AG04450 (cell line): ENCODE measurements at regions of chr16 and their contacts with region 1.

Region 1: DNA sequence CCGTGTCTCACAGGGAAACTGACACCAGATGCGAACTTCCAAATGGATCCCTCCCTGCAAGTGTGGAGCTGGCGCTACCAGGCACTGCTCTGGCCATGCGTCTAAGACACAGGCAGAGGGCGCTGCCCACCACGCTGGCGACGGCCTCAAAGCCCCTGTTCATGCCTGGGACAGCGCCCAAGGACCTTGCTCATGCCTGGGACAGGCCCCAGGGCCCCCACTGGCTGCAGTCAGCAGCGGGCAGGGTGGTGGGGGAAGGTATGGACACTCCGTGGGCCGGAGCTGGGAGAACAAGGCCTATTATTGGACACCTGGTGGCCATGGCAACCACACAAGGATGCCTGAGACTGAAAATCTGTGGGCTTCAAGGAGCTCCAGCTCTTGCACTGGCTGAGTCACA is 8.8 kb downstream of the ZG16B start:
- DNase-seq: peak; percentile 65
- H3K4me3 ChIP-seq: no peak overlapping the region
- H3K27ac ChIP-seq: peak overlapping the region; percentile 21
- H3K27me3 ChIP-seq: no peaks in the 10 kb centered on the region
- CTCF ChIP-seq: peak; percentile 96

Region 2: DNA sequence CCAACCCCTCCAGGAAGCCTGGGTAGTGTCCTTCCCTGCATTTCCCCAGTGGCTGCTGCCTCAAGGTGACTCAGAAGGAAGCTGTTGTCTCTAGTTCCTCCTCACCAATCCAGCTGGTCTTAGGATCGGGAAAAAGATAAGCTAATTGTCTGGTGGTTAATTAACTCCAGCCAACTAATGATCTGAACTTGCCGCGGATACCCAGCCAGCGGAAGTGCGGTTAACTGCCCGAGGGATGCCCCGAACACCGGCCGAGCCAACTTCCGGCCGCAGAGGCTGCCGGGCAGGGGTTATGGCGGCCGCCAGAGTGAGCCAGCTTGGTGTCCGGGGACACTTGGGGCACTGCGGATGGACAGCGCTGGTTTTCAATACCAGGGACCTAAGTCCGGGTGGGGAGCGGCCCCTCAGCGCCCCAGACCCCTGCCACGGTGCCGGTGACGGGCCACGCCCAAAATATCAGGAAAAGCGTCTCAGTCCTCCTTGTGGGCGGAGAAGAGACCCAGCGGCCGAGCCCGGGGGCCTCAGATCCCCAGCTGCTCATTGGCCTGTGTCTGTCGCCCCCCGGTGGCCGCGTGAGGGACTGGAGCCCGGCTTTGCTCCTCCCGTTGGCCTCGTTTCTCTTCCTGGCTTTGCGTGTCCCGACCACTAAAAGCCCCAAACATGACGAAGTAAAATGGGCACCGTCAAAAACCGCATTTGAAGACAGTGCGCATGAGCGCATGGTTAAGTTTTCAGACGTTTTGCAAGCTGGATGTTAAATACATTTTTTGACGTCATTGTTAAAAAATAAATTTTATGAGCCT is 29.3 kb after region 1 on chr16:
- CTCF ChIA-PET with region 1: interaction called, 75 read pairs
- POLR2A ChIA-PET with region 1: interaction called, 23 read pairs
- DNase-seq: peak; percentile 84
- H3K4me3 ChIP-seq: peak overlapping the region; percentile 66
- H3K27ac ChIP-seq: peak overlapping the region; percentile 89
- H3K27me3 ChIP-seq: no peaks in the 10 kb centered on the region
- CTCF ChIP-seq: peak; percentile 94

Region 3: GRCh38 chr16:2874912-2875362 is 36.0 kb after region 1 on chr16:
- CTCF ChIA-PET with region 1: interaction called, 35 read pairs
- POLR2A ChIA-PET with region 1: no interaction called
- DNase-seq: no peak
- H3K4me3 ChIP-seq: no peak overlapping the region
- H3K27ac ChIP-seq: no peak overlapping the region
- H3K27me3 ChIP-seq: peaks cover 2% of the 10 kb centered on the region
- CTCF ChIP-seq: peak; percentile 91

Region 4: GRCh38 chr16:2911580-2912329 is 72.8 kb after region 1 on chr16 and contains the start of gene FLYWCH1:
- CTCF ChIA-PET with region 1: interaction called, 12 read pairs
- POLR2A ChIA-PET with region 1: interaction called, 4 read pairs
- DNase-seq: peak; percentile 94
- H3K4me3 ChIP-seq: peak within 1 kb of the TSS; percentile 91
- H3K27ac ChIP-seq: peak within 1 kb of the TSS; percentile 91
- H3K27me3 ChIP-seq: no peaks in the 10 kb centered on the region
- CTCF ChIP-seq: no peak
- polyA plus RNA-seq, gene FLYWCH1: 15.1 and 19.8 TPM in 2 replicates

Region 5: GRCh38 chr16:2919511-2920255 is 80.8 kb after region 1 on chr16:
- CTCF ChIA-PET with region 1: interaction called, 14 read pairs
- POLR2A ChIA-PET with region 1: no interaction called
- DNase-seq: peak; percentile 34
- H3K4me3 ChIP-seq: no peak overlapping the region
- H3K27ac ChIP-seq: no peak overlapping the region
- H3K27me3 ChIP-seq: no peaks in the 10 kb centered on the region
- CTCF ChIP-seq: peak; percentile 87